ENCODE measurements at regions of chr5 and their contacts with region 1.

Region 1: DNA sequence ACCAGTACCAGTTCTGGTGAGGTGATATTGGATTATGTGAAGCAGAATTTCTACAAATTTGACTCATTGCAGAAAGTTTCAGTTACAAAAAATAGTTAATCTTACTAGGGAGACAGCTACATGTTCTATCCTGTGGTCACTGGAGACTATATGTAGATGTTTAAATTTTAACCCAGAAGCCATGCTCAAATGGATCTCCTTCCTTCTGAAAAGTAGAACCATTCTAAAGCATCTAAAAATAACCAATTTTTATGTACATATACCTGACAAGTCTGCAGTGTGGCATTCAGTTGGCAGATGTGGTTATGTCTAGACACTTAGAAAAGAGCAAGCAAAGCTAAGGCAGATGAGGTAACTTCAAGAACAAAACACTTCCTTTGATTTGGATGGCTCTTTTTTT is 65.5 kb upstream of the POU4F3 start:
- DNase-seq: no peak
- ATAC-seq: no peak
- H3K4me3 Mint-ChIP-seq: no peak overlapping the region
- H3K27ac Mint-ChIP-seq: no peak overlapping the region
- H3K4me1 Mint-ChIP-seq: no peaks in the 10 kb centered on the region
- H3K27me3 Mint-ChIP-seq: no peaks in the 10 kb centered on the region
- CTCF ChIP-seq: no peak

Region 2: GRCh38 chr5:146091881-146092280 is 181.2 kb before region 1 on chr5:
- CTCF ChIA-PET with region 1: no interaction called
- POLR2A ChIA-PET with region 1: no interaction called
- intact Hi-C with region 1: no loop called
- DNase-seq: no peak
- ATAC-seq: no peak
- H3K4me3 Mint-ChIP-seq: no peak overlapping the region
- H3K27ac Mint-ChIP-seq: no peak overlapping the region
- H3K4me1 Mint-ChIP-seq: no peaks in the 10 kb centered on the region
- H3K27me3 Mint-ChIP-seq: no peaks in the 10 kb centered on the region
- CTCF ChIP-seq: no peak

Region 3: GRCh38 chr5:146173597-146173996 is 99.5 kb before region 1 on chr5:
- CTCF ChIA-PET with region 1: no interaction called
- POLR2A ChIA-PET with region 1: interaction called, 3 read pairs
- intact Hi-C with region 1: loop called (anchors 5 kb)
- DNase-seq: no peak
- ATAC-seq: no peak
- H3K4me3 Mint-ChIP-seq: no peak overlapping the region
- H3K27ac Mint-ChIP-seq: peak overlapping the region; percentile 6
- H3K4me1 Mint-ChIP-seq: peaks cover 13% of the 10 kb centered on the region
- H3K27me3 Mint-ChIP-seq: no peaks in the 10 kb centered on the region
- CTCF ChIP-seq: no peak

Region 4: GRCh38 chr5:146238973-146239372 is 34.1 kb before region 1 on chr5:
- CTCF ChIA-PET with region 1: no interaction called
- POLR2A ChIA-PET with region 1: no interaction called
- intact Hi-C with region 1: loop called (anchors 5 kb)
- DNase-seq: no peak
- ATAC-seq: no peak
- H3K4me3 Mint-ChIP-seq: no peak overlapping the region
- H3K27ac Mint-ChIP-seq: no peak overlapping the region
- H3K4me1 Mint-ChIP-seq: no peaks in the 10 kb centered on the region
- H3K27me3 Mint-ChIP-seq: no peaks in the 10 kb centered on the region
- CTCF ChIP-seq: no peak

Region 5: GRCh38 chr5:146451411-146452073 is 178.4 kb after region 1 on chr5:
- CTCF ChIA-PET with region 1: no interaction called
- POLR2A ChIA-PET with region 1: no interaction called
- intact Hi-C with region 1: no loop called
- DNase-seq: no peak
- ATAC-seq: no peak
- H3K4me3 Mint-ChIP-seq: no peak overlapping the region
- H3K27ac Mint-ChIP-seq: no peak overlapping the region
- H3K4me1 Mint-ChIP-seq: peaks cover 58% of the 10 kb centered on the region
- H3K27me3 Mint-ChIP-seq: no peaks in the 10 kb centered on the region
- CTCF ChIP-seq: no peak

Measured in activated B cell treated with CpG ODN at 0.5 μM for 24 hours (primary cell).